ENCODE measurements at regions of chr14 and their contacts with region 1.

Region 1: DNA sequence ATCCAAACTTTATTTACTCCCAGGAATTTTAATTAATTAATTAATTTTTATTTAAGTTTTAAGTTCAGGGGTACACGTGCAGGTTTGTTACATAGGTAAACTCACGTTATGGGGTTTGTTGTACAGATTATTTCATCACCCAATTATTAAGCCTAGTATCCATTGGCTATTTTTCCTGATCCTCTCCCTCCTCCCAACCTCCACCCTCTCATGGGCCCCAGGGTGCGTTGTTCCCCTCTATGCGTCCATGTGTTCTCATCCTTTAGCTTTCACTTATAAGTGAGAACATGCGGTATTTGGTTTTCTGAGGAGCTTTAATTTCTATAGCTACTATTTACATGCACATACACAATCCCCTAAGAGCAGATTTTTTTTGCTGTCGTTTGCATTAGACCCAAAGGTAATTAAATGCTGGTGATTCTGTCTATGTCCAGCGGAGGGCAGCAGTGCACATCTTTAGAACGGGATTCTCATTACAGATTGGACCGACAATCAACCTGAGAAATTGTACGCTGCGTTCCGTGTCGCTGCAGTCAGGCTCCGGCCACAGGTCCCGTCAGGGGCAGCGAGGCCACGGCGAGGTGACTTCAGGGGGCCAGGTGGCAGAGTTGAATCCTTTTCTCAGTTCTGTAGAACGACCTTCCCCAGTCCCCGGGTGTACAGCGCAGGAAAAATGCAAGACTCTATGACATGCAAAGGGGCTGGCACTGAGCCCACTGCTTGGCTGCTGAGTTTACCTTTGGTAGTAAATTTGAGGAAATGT is 11.6 kb downstream of the TMEM30B start:
- DNase-seq: peak; percentile 98
- ATAC-seq: peak; percentile 71
- H3K4me3 ChIP-seq: peak overlapping the region; percentile 65
- H3K27ac ChIP-seq: no peak overlapping the region
- H3K4me1 ChIP-seq: peaks cover 6% of the 10 kb centered on the region
- H3K27me3 ChIP-seq: no peaks in the 10 kb centered on the region
- CTCF ChIP-seq: peak; percentile 97

Region 2: GRCh38 chr14:61280526-61281185 is 11.2 kb after region 1 on chr14:
- CTCF ChIA-PET with region 1: interaction called, 25 read pairs
- POLR2A ChIA-PET with region 1: interaction called, 13 read pairs
- intact Hi-C with region 1: no loop called
- DNase-seq: peak; percentile 84
- ATAC-seq: peak; percentile 55
- H3K4me3 ChIP-seq: peak overlapping the region; percentile 85
- H3K27ac ChIP-seq: peak overlapping the region; percentile 82
- H3K4me1 ChIP-seq: peaks cover 58% of the 10 kb centered on the region
- H3K27me3 ChIP-seq: no peaks in the 10 kb centered on the region
- CTCF ChIP-seq: peak; percentile 89

Region 3: DNA sequence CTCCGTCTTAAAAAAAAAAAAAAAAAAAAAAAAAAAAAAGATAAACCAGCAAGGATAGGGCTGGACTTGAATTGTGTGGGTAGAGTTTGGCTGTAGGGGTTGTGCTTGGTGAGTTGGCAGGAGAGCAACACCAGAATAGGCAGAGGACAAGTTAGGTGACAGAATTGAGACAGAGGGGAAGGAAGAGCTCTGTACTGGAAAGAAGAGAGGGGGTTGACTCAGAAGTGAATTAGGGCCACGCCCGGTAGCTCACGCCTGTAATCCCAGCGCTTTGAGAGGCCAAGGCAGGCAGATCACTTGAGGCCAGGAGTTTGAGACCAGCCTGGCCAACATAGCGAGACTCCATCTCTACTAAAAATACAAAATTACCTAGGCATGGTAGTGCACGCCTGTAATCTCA is 17.7 kb after region 1 on chr14:
- CTCF ChIA-PET with region 1: interaction called, 25 read pairs
- POLR2A ChIA-PET with region 1: interaction called, 3 read pairs
- intact Hi-C with region 1: loop called (anchors 1 kb)
- DNase-seq: peak; percentile 40
- ATAC-seq: no peak
- H3K4me3 ChIP-seq: no peak overlapping the region
- H3K27ac ChIP-seq: no peak overlapping the region
- H3K4me1 ChIP-seq: peaks cover 45% of the 10 kb centered on the region
- H3K27me3 ChIP-seq: no peaks in the 10 kb centered on the region
- CTCF ChIP-seq: no peak

Region 4: GRCh38 chr14:61797309-61797708 is 527.8 kb after region 1 on chr14:
- CTCF ChIA-PET with region 1: no interaction called
- POLR2A ChIA-PET with region 1: interaction called, 15 read pairs
- intact Hi-C with region 1: no loop called
- DNase-seq: no peak
- ATAC-seq: no peak
- H3K4me3 ChIP-seq: no peak overlapping the region
- H3K27ac ChIP-seq: no peak overlapping the region
- H3K4me1 ChIP-seq: no peaks in the 10 kb centered on the region
- H3K27me3 ChIP-seq: no peaks in the 10 kb centered on the region
- CTCF ChIP-seq: no peak

Measured in PC-3 (cell line).